Aorta (tissue), 5 donors: ENCODE measurements at regions of chr12 and their contacts with region 1.

Region 1: GRCh38 chr12:117836999-117837736 is 131.6 kb downstream of the KSR2 start:
- DNase-seq: peak; percentile 69 to 92
- ATAC-seq: peak; percentile 81
- H3K4me3 ChIP-seq: no peak overlapping the region
- H3K27ac ChIP-seq: no peak overlapping the region
- H3K4me1 ChIP-seq: no peaks in the 10 kb centered on the region
- H3K27me3 ChIP-seq: no peaks in the 10 kb centered on the region

Region 2: GRCh38 chr12:117212563-117213190 is 624.5 kb before region 1 on chr12:
- intact Hi-C with region 1: loop called (anchors 2 to 5 kb)
- DNase-seq: peak; percentile 71 to 81
- ATAC-seq: peak; percentile 86
- H3K4me3 ChIP-seq: no peak overlapping the region
- H3K27ac ChIP-seq: no peak overlapping the region
- H3K4me1 ChIP-seq: no peaks in the 10 kb centered on the region
- H3K27me3 ChIP-seq: no peaks in the 10 kb centered on the region

Region 3: DNA sequence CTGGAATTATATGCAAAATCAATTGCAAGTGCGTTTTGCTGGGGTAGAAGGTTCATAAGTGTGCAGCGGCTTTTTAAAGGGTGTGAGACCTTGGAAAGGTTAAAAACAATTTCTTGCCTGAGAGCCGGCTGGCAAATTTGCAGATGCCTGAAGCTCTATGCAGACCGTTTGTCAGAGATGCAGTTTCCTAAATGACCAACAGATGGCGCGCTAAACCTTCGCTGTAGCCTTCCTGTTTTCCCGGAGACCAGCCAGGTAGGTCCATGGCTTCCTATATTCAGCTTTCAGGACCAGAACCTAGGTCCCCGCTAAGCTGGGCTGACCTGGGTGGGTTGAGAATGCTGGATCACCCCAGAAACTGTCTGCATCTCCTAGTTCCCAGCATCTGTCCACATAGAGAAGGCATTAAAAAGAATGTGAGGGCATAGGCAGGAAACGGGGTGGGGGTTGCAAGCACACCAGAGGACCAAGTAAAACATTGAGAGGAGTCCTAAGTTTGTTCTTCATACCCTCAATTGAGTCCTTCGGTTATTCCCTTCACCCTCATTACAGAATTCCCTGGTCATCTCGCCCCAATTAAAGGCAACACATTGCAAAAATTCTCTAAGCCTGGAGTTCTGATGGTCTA is 470.0 kb before region 1 on chr12:
- intact Hi-C with region 1: loop called (anchors 1 to 5 kb)
- DNase-seq: peak in 1 of 2 donors; percentile 54
- ATAC-seq: no peak
- H3K4me3 ChIP-seq: no peak overlapping the region
- H3K27ac ChIP-seq: no peak overlapping the region
- H3K4me1 ChIP-seq: no peaks in the 10 kb centered on the region
- H3K27me3 ChIP-seq: no peaks in the 10 kb centered on the region

Region 4: GRCh38 chr12:117629454-117629853 is 207.7 kb before region 1 on chr12:
- intact Hi-C with region 1: no loop called
- DNase-seq: no peak
- ATAC-seq: no peak
- H3K4me3 ChIP-seq: no peak overlapping the region
- H3K27ac ChIP-seq: no peak overlapping the region
- H3K4me1 ChIP-seq: no peaks in the 10 kb centered on the region
- H3K27me3 ChIP-seq: no peaks in the 10 kb centered on the region

Region 5: GRCh38 chr12:117732761-117733160 is 104.4 kb before region 1 on chr12:
- intact Hi-C with region 1: no loop called
- DNase-seq: no peak
- ATAC-seq: no peak
- H3K4me3 ChIP-seq: no peak overlapping the region
- H3K27ac ChIP-seq: no peak overlapping the region
- H3K4me1 ChIP-seq: no peaks in the 10 kb centered on the region
- H3K27me3 ChIP-seq: no peaks in the 10 kb centered on the region

Region 6: GRCh38 chr12:117792471-117793424 is 44.4 kb before region 1 on chr12:
- intact Hi-C with region 1: no loop called
- DNase-seq: no peak
- ATAC-seq: no peak
- H3K4me3 ChIP-seq: no peak overlapping the region
- H3K27ac ChIP-seq: no peak overlapping the region
- H3K4me1 ChIP-seq: no peaks in the 10 kb centered on the region
- H3K27me3 ChIP-seq: no peaks in the 10 kb centered on the region

Region 7: DNA sequence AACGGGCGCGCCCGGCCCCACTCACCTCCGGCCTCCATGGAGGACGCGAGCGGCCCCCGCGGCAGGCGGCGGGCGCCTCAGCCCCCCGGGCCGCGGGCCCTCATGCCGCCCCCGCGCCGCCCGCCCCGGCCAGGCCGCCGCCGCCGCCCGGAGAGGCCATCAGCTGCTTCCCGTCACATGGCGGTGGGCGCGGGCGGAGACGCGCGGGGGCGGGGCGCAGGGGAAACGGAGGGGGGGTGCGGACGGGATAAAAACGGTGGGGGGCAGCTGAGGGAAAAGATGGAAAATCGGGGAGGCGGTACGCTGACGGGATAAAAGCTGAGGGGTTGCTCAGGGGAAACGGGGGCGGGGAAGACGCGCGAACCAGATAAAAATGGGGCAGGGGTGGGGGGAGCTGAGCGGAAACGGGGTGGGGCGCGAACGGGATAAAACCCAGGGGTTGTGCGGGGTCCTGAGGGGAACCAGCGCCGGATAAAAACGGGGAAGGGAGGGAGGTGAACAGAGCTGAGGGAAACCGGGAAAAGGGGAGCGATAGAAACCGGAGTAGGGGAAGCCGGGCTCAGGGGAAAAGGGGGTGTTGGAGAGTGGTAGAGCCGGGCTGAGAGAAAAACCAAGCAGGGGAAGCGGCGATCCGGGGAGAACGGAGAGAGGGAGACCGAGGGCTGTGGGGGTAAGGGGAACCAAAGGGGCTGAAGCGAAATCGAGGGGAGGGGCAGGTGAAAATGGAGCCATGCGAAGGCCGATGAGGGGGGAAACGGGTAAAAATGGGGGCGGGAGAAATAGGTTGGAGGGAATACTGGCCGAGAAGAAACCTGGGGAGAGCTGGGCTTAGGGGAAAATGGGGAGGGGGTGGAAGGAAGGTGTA is 224.1 kb after region 1 on chr12 and contains the start of gene WSB2:
- intact Hi-C with region 1: no loop called
- DNase-seq: peak; percentile 86 to 95
- ATAC-seq: peak; percentile 82
- H3K4me3 ChIP-seq: peak within 1 kb of the TSS; percentile 99 to 100
- H3K27ac ChIP-seq: peak within 1 kb of the TSS; percentile 97 to 100
- H3K4me1 ChIP-seq: no peaks in the 10 kb centered on the region
- H3K27me3 ChIP-seq: no peaks in the 10 kb centered on the region
- total RNA-seq, gene WSB2: 61.2 to 97.3 TPM